GM13977 (cell line): ENCODE measurements at regions of chr11 and their contacts with region 1.

Region 1: DNA sequence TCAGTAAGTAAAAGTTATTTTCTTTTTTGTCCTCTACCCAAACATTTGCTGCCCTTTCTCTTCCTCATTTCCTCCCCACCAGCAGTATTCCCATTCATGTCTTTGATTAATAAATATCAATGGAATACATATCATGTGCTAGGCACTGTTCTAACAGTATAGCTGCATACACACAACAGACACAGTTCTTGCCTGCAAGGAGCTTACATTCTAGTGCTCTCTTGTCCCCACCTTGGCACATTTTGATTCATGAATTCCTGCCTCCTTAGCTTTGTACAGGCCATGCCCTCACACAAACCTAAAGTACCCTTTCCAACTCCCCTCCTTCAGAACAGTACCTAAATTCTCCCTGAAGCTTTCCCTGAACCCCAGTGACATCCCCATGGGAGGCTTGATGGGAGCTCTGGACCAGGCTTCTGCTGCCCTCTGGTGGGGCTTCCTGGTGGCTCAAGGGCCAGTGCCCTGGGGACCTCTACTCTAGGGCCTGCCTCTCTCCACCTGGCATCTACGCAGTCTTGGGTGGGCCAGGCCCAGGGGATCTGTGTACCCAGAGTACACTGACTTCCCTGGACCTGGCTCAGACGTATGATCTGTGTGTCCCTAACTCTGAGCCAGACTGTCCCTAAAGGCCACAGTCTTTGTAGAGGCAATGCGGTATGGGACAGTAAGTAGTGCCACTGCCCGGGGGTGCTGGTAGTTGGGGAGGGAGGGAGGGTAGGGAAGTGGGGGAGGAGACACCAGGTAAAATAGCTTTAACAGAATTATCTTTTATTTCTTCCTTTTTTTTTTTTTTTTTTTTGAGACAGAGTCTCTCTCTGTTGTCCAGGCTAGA is 14.1 kb downstream of the RPS13 start:
- DNase-seq: peak; percentile 49
- CTCF ChIP-seq: peak; percentile 78

Region 2: DNA sequence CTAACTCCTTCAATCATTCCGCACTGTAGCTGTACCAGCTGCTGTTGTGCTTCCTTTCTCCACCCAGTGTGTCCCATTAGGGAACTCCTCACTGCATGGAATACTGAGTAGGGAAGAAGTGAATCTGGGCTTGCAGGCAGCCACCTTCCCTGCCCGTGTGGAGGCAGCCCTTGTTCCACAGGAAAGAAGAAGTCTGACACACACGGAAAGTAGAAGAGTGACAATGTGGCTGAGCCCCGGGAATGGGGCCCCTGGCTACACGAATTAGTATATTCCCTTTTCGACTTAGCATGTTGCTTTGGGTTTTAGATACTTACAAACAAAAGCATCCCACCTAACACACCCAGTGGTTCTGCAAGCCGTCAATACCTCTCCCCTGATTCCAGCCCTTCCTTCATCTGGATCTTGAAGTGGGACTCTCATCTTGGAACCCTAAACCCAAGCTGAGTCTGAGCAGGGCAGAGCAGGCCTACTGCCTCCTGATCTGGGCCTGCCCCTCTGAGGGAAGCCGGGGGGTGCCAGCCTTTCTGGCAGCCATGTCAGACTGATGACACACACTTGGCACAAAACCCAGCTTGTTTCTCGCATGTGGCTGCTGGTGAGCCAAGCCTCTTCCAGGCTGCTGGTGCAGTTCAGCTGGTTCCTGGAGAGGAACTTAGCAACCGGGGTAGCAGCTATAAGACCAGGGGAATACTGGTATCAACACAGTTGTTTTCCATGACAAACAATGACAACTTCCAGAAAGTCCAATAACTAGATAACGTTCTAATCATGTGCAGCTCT is 253.3 kb before region 1 on chr11:
- in situ Hi-C with region 1: loop called (anchors 10 kb)
- DNase-seq: no peak
- CTCF ChIP-seq: no peak

Region 3: GRCh38 chr11:16935518-16936302 is 127.7 kb before region 1 on chr11:
- in situ Hi-C with region 1: loop called (anchors 10 kb)
- DNase-seq: peak; percentile 49
- CTCF ChIP-seq: peak; percentile 81

Region 4: GRCh38 chr11:17400048-17400775 is 336.8 kb after region 1 on chr11:
- in situ Hi-C with region 1: no loop called
- DNase-seq: no peak
- CTCF ChIP-seq: no peak